Heart right ventricle (tissue), 16 donors: ENCODE measurements at regions of chr1 and their contacts with region 1.

Region 1: DNA sequence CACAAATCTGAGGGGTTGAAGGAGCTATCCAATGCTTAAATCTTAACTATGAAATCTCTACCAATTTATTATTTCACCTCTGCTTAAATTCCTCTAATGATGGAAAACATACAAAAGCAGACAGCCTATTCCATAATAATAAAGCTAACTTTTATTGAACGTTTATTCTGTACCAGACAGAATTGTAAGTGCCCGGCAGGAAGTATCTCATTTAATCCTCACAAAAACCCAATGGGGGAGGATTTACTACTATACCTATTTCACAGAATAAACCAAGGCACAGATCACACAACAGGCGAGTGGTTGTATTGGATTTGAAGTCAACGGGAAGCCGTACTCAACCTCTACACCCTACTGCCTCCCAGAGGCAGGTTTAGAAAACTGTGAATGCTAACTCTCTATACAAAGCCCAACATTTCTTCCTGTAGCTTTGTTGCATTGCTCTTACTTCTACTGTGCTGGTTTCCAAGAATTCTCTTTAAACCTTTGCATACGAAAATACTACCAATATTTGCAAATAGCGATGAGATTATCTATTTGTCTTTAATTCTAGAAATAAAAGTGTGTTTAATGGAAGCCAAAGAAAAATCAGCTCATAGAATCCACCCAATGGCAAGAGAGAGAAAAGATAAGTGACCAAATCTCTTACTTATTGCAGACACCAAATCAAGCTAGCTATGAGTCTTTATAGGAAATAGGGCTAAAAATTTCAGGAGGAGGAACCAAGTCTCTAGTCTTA is 33.5 kb upstream of the C1orf53 start:
- DNase-seq: peak in 1 of 2 donors; percentile 30
- ATAC-seq: peak in 6 of 8 donors; percentile 71 to 92 (median 82)
- H3K4me3 ChIP-seq: no peak overlapping the region
- H3K27ac ChIP-seq: no peak overlapping the region
- H3K4me1 ChIP-seq: no peaks in the 10 kb centered on the region
- H3K27me3 ChIP-seq: peaks cover 0 to 4% (median 0%) of the 10 kb centered on the region in 7 donors
- CTCF ChIP-seq: peak; percentile 13 to 77 (median 65)

Region 2: DNA sequence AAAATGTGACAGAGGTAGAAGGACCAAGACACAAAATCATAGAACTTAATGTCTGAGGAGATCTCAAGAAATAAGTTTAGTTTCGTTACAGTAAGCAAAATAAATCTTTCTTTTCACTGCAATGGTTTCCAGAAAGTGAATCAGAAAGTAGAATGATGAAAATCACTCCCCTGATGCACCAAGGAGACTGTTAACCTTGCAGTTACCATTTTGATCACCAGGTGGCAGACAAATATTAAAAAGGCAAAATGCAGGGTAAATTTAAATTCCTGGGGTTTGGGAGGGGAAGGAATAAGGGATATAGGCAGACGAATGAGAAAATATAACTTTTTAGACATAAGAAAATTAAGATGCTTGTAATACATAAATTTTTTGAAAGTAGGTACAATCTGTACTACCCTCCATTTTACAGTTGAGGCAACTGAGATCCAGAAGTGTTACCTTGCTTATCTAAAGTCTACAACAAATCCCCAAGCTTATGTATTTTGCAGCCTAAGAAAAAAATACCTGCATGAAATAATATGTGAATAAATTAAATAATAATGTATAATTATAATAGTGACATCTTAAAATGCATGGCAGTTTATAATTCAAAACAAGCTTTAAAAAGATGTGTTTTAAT is 347.7 kb before region 1 on chr1:
- intact Hi-C with region 1: loop called in 8 of 10 experiments (anchors 5 to 10 kb)
- DNase-seq: no peak
- ATAC-seq: no peak
- H3K4me3 ChIP-seq: no peak overlapping the region
- H3K27ac ChIP-seq: no peak overlapping the region
- H3K4me1 ChIP-seq: peaks cover 0 to 8% (median 0%) of the 10 kb centered on the region in 9 donors
- H3K27me3 ChIP-seq: no peaks in the 10 kb centered on the region
- CTCF ChIP-seq: peak in 8 of 9 donors; percentile 26 to 68 (median 57)

Region 3: DNA sequence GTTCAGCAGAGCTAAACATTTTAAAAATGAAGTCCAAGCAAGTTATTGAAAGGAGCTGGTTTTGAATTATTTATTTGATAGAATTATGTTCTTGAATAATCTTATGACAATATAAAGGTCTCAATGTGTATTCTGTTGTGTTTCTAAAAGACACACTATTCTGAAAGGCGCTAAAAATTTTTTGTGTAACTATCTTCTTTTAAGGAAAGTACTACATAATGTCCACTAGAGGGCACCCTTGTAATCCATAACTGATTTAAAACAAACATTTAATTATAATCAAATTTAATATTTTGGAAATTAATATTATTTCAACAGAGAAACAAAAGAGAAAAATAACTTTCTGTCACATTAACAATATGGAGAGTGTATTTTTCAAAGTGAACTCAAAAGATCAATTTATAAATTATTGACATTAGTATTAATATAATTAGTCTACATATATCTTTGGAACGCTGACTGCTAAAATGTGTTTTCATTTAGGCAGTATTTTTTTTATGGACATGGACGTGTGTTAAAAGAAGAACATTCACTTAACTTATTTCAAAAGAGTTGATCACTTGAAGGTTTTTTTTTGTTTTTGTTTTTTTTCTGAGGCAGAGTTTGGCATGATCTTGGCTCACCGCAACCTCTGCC is 342.1 kb before region 1 on chr1:
- intact Hi-C with region 1: loop called in 8 of 10 experiments (anchors 5 to 10 kb)
- DNase-seq: no peak
- ATAC-seq: no peak
- H3K4me3 ChIP-seq: no peak overlapping the region
- H3K27ac ChIP-seq: no peak overlapping the region
- H3K4me1 ChIP-seq: no peaks in the 10 kb centered on the region
- H3K27me3 ChIP-seq: no peaks in the 10 kb centered on the region
- CTCF ChIP-seq: peak; percentile 62 to 85 (median 78)

Region 4: DNA sequence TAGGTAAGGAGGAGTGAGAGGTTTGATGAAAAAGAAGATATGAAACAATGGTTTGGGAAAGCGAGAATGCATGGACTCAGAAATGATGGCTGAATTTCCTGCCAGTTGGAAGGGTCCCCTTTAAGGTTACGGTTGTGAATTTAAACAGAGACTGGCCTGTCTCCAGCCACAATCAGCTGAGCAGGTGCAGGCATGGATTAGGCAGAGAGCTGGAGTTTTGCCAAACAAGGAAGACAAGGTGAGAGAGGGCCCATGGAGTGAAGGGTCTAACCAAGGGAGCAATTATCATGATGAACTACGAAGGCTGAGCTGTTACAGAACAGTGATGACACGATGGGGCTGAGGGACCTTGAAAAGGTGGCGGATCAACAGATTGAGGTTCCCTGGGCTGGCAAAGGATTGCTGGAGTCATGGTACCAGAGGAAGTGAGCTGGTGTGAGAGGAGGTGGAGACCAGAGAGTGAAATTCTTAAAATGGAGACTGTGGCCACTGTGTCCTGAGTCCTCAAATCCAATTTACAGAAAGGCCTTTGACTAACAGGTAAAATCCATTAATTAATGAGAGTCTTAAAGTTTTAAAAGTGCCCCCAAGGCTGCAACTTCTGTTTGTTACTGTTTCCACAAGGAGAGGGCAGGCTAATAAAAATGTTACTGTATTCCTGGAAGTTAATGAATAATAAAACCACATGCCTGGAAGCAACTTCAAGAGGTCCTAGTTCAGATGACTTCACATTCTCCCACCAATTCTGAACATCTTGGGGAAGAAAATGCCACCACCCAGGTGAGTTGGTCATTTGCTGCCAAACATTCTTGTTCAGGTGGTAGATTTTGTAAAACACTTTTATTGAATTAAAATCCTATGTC is 89.7 kb after region 1 on chr1:
- intact Hi-C with region 1: no loop called
- DNase-seq: no peak
- ATAC-seq: no peak
- H3K4me3 ChIP-seq: no peak overlapping the region
- H3K27ac ChIP-seq: no peak overlapping the region
- H3K4me1 ChIP-seq: no peaks in the 10 kb centered on the region
- H3K27me3 ChIP-seq: no peaks in the 10 kb centered on the region
- CTCF ChIP-seq: no peak

Region 5: GRCh38 chr1:198030682-198031081 is 161.8 kb after region 1 on chr1:
- intact Hi-C with region 1: no loop called
- DNase-seq: no peak
- ATAC-seq: no peak
- H3K4me3 ChIP-seq: no peak overlapping the region
- H3K27ac ChIP-seq: no peak overlapping the region
- H3K4me1 ChIP-seq: peaks cover 0 to 5% (median 0%) of the 10 kb centered on the region in 9 donors
- H3K27me3 ChIP-seq: peaks cover 0 to 5% (median 0%) of the 10 kb centered on the region in 7 donors
- CTCF ChIP-seq: no peak